Activated CD8-positive, alpha-beta T cell treated with anti-CD3 and anti-CD28 coated beads for 36 hours (primary cell): ENCODE measurements at regions of chr14 and their contacts with region 1.

Region 1: DNA sequence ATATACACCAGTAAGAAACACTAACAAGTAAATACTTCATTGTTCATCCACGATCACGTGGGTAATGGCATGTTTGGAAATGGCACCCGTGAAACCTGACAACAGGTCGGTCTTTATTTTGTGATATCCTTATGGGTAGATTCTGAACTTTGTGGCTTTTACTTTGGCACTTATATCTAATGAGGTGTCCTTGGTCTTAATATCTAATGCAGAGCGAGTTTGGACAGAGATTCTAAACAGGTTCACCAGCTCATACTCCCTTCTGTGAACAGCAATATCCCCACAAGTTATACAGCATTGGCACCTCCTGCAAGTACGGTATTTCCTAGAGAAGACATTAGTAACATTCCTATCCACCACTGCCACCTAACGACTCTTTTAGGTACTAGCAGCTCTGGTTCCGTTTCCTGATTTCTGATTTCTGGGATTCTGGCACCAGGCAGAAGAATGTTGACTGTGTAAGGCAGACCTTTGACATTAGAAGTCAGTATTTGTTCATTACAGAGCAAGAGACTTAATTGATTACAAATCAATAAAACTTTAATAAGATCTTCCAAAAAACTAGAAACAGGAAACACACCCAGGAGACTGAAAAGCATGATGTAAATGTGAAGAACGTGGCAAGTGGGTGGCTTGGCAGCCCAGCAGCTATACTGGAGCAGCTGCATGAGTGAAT is 2.4 kb downstream of the ANG start:
- DNase-seq: peak; percentile 47
- ATAC-seq: peak; percentile 90
- H3K4me3 Mint-ChIP-seq: no peak overlapping the region
- H3K27ac Mint-ChIP-seq: no peak overlapping the region
- H3K4me1 Mint-ChIP-seq: peaks cover 9% of the 10 kb centered on the region
- H3K27me3 Mint-ChIP-seq: peaks cover 4% of the 10 kb centered on the region
- CTCF ChIP-seq: peak; percentile 97

Region 2: DNA sequence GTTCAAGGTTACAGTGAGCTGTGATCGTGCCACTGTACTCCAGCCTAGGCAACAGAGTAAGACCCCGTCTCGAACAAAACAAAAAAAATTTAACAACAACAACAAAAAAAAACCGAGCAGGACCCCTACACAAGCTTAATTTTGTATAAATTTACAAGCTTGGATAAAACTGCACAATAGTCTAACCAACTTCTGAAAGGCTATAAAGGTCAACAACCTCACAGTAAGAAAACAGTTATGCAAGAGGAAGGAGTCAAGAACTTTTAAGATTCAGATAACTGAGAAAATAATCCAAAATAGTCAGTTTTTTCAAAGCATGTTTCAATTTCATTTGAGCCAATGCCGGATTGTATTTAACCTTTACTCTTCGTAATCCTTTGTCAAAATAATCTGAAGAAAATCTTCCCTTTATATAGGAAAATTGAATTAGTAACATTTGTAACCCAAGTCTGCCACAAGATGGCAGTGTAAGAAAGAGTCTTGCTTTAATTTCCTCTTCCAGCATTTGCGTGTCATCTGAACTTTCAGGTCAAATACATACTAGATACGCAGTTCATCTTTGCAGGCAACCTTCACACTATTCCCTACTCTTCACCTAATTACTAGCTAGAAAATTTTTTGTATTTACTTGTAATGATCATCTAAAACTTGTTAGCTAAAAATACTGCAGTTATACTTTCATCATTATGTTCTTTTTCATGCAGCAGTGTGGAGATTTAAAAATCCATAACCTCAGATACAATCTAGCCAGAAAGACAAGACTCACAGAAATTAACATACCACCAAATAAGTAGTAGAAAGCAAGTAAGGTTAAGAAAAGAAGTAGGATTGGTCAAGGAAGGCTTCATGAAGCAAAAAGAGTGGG is 363.7 kb before region 1 on chr14:
- CTCF ChIA-PET with region 1: interaction called, 12 read pairs
- POLR2A ChIA-PET with region 1: no interaction called
- intact Hi-C with region 1: no loop called
- DNase-seq: peak; percentile 13
- ATAC-seq: peak; percentile 53
- H3K4me3 Mint-ChIP-seq: peak overlapping the region; percentile 0
- H3K27ac Mint-ChIP-seq: peak overlapping the region; percentile 41
- H3K4me1 Mint-ChIP-seq: peaks cover 36% of the 10 kb centered on the region
- H3K27me3 Mint-ChIP-seq: no peaks in the 10 kb centered on the region
- CTCF ChIP-seq: peak; percentile 87

Region 3: GRCh38 chr14:20530771-20531571 is 160.0 kb before region 1 on chr14:
- CTCF ChIA-PET with region 1: interaction called, 4 read pairs
- POLR2A ChIA-PET with region 1: no interaction called
- intact Hi-C with region 1: loop called (anchors 5 kb)
- DNase-seq: peak; percentile 90
- ATAC-seq: peak; percentile 88
- H3K4me3 Mint-ChIP-seq: peak overlapping the region; percentile 40
- H3K27ac Mint-ChIP-seq: no peak overlapping the region
- H3K4me1 Mint-ChIP-seq: peaks cover 7% of the 10 kb centered on the region
- H3K27me3 Mint-ChIP-seq: peaks cover 2% of the 10 kb centered on the region
- CTCF ChIP-seq: peak; percentile 80

Region 4: GRCh38 chr14:20578784-20579502 is 112.0 kb before region 1 on chr14:
- CTCF ChIA-PET with region 1: no interaction called
- POLR2A ChIA-PET with region 1: no interaction called
- intact Hi-C with region 1: no loop called
- DNase-seq: no peak
- ATAC-seq: no peak
- H3K4me3 Mint-ChIP-seq: no peak overlapping the region
- H3K27ac Mint-ChIP-seq: no peak overlapping the region
- H3K4me1 Mint-ChIP-seq: no peaks in the 10 kb centered on the region
- H3K27me3 Mint-ChIP-seq: no peaks in the 10 kb centered on the region
- CTCF ChIP-seq: no peak

Region 5: GRCh38 chr14:20632682-20633428 is 58.1 kb before region 1 on chr14:
- CTCF ChIA-PET with region 1: interaction called, 13 read pairs
- POLR2A ChIA-PET with region 1: no interaction called
- intact Hi-C with region 1: no loop called
- DNase-seq: peak; percentile 92
- ATAC-seq: peak; percentile 87
- H3K4me3 Mint-ChIP-seq: peak overlapping the region; percentile 80
- H3K27ac Mint-ChIP-seq: peak overlapping the region; percentile 76
- H3K4me1 Mint-ChIP-seq: peaks cover 35% of the 10 kb centered on the region
- H3K27me3 Mint-ChIP-seq: peaks cover 31% of the 10 kb centered on the region
- CTCF ChIP-seq: no peak

Region 6: DNA sequence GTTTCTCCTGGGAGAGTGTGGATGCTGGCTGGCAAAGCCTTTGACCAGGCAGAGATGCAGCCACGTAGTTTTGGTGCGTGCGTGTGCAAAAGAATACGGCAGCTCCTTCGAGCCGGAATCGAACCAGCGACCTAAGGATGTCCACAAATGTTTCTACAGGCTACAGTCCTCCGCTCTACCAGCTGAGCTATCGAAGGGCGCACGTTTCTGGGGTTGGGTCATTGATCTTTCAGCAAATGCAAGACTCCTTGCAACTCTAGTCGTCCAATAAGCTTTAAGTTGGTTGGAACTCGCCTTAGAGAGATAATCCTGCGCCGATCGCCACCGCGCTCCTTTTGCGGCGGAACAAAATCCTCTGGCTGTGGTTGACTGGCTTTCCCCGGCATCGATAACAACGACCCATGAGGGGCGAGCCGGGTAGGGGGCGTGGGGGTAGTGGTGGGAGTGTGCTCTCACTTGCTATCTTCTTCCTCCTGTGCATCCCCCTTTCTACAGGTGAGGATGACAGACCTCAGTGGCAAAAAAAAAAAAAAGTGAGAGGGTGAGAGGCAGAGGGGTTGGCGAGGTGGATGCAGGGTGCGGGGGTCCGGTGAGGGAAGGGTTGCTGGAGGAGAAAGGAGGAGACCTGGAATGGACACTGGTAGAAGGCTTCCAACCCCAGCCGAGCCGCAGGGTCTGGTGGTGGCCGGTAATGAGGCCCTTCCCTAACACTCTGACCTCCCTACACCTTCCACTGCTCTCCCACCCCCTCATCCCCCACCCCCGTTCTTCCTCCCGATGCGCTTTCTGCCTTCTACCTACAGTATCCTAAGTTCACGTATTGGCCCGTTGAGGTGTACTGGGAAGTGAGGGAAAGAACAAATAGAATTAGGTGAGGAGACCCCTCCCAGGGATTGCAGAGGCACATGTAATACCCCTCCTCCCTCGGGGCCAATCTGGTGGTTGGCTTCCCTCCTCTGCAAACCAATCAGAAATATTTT is 37.7 kb before region 1 on chr14:
- CTCF ChIA-PET with region 1: interaction called, 69 read pairs
- POLR2A ChIA-PET with region 1: no interaction called
- intact Hi-C with region 1: no loop called
- DNase-seq: peak; percentile 86
- ATAC-seq: peak; percentile 86
- H3K4me3 Mint-ChIP-seq: peak overlapping the region; percentile 65
- H3K27ac Mint-ChIP-seq: no peak overlapping the region
- H3K4me1 Mint-ChIP-seq: peaks cover 19% of the 10 kb centered on the region
- H3K27me3 Mint-ChIP-seq: peaks cover 58% of the 10 kb centered on the region
- CTCF ChIP-seq: no peak

Region 7: DNA sequence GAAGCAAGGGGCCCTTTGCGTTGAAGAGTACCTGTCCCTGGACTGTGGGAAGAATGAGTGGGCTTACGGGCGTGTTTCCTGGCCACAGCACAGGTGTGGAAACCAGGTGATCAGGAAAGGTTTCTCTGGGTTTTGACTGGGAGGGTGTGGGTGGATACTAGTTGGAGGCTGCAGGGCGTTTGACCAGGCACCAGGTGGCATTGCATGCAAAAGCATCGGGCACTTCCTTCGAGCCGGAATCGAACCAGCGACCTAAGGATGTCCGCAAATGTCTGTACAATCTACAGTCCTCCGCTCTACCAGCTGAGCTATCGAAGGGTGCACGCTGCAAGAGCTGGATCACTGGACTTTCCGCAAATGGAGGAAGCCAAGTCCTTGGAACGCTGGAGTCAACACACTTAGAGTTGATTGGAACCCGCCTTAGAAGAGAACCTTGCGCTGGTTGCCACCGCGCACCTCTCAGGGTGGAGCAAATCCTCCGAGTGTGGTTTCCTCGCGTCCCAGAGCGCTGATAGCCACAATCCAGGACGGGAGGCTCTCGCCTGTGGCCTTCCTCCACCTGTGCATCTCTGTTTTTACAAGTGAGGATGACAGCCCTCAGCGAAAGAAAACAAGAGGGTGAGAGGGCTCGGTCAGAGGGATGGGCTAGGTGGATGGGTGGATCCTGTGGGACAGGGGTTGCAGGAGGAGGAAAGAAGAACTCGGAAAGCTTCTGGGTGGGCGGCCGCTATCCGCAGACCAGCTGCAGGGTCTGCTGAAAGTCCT is 27.8 kb before region 1 on chr14:
- CTCF ChIA-PET with region 1: interaction called, 69 read pairs
- POLR2A ChIA-PET with region 1: no interaction called
- intact Hi-C with region 1: loop called (anchors 1 kb)
- DNase-seq: peak; percentile 93
- ATAC-seq: peak; percentile 93
- H3K4me3 Mint-ChIP-seq: peak overlapping the region; percentile 75
- H3K27ac Mint-ChIP-seq: no peak overlapping the region
- H3K4me1 Mint-ChIP-seq: peaks cover 20% of the 10 kb centered on the region
- H3K27me3 Mint-ChIP-seq: peaks cover 10% of the 10 kb centered on the region
- CTCF ChIP-seq: peak; percentile 78

Region 8: DNA sequence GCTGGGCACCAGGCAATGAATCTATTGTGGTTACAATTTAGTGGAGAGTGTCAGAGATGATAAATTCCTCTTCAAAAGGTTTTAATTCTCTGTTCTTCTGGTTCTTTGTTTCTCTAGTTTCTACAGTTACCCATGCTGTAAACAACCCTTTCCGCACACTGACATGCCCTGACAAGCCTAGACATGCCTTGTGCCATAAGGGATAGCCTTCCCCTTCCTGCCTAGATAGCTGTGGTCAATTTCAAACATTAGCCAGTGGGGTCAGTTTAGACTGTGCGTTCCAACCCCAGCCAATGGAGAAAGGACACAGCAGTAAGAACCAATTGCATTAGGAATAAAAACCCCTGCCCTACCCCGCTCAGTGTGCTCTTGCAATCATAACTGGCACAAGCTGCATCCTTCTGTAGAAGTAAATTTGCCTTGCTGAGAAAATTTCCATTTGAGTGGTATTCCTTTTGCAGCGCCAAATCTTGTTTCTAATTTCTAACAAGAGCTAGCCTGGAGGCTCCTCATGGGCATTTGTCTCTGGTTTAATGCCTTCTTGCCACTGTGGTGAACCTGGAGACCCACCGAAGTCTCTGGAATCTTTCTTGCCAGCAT is 61.1 kb after region 1 on chr14:
- CTCF ChIA-PET with region 1: no interaction called
- POLR2A ChIA-PET with region 1: no interaction called
- intact Hi-C with region 1: no loop called
- DNase-seq: no peak
- ATAC-seq: no peak
- H3K4me3 Mint-ChIP-seq: no peak overlapping the region
- H3K27ac Mint-ChIP-seq: no peak overlapping the region
- H3K4me1 Mint-ChIP-seq: no peaks in the 10 kb centered on the region
- H3K27me3 Mint-ChIP-seq: peaks cover 5% of the 10 kb centered on the region
- CTCF ChIP-seq: no peak